ENCODE measurements at regions of chr9 and their contacts with region 1.

Region 1: DNA sequence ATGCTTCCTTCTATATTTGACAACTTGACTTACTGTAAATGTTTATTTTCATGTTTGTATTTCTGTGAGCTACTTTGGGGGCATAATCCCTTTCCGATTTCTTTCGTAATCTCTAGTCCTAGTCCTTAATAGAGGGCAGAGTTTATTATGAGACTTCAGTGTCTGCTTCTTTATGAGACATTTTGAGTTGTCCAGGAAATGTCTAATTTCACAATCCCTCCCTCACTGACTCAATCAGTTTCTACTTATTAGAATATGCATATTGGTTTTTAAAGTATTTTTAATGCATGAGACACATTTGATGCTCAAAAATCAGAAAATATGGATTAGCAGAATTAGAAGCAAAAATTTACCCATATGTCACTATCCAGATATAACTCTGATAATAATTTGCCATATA is 160.9 kb downstream of the FOCAD start:
- DNase-seq: no peak
- ATAC-seq: no peak
- H3K4me3 ChIP-seq: no peak overlapping the region
- H3K4me3 Mint-ChIP-seq: no peak overlapping the region
- H3K27ac ChIP-seq: no peak overlapping the region
- H3K27ac Mint-ChIP-seq: no peak overlapping the region
- H3K4me1 ChIP-seq: no peaks in the 10 kb centered on the region
- H3K4me1 Mint-ChIP-seq: peaks cover 0 to 7% (median 0%) of the 10 kb centered on the region in 3 donors
- H3K27me3 ChIP-seq: no peaks in the 10 kb centered on the region
- H3K27me3 Mint-ChIP-seq: no peaks in the 10 kb centered on the region

Region 2: GRCh38 chr9:20872340-20872977 is 27.5 kb after region 1 on chr9:
- CTCF ChIA-PET with region 1: no interaction called
- POLR2A ChIA-PET with region 1: no interaction called
- DNase-seq: no peak
- ATAC-seq: no peak
- H3K4me3 ChIP-seq: no peak overlapping the region
- H3K4me3 Mint-ChIP-seq: no peak overlapping the region
- H3K27ac ChIP-seq: no peak overlapping the region
- H3K27ac Mint-ChIP-seq: no peak overlapping the region
- H3K4me1 ChIP-seq: peaks cover 0 to 2% of the 10 kb centered on the region in 2 experiments
- H3K4me1 Mint-ChIP-seq: peaks cover 5 to 9% (median 5%) of the 10 kb centered on the region in 3 donors
- H3K27me3 ChIP-seq: no peaks in the 10 kb centered on the region
- H3K27me3 Mint-ChIP-seq: no peaks in the 10 kb centered on the region

Region 3: DNA sequence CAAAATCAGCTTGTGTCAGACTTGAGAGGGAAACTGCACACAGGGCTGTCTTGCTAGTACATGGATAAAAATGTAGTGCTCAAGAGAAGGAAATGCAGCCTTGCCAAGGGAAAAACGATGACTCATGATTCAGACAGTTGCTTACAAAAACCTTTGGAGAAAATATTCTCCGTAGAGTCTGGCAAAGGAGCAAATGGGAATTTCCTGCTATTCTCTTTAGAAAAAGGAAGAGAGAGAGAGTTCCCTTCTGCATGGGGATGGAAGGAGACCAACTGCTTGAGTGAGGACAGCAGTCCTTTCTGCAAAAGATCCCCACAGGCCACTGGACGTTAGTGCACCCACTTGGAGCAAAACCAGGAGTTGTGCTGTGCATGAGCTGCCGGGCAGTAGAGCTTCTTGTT is 225.3 kb after region 1 on chr9:
- CTCF ChIA-PET with region 1: no interaction called
- POLR2A ChIA-PET with region 1: interaction called in 1 of 2 experiments, 11 read pairs
- DNase-seq: no peak
- ATAC-seq: no peak
- H3K4me3 ChIP-seq: no peak overlapping the region
- H3K4me3 Mint-ChIP-seq: no peak overlapping the region
- H3K27ac ChIP-seq: no peak overlapping the region
- H3K27ac Mint-ChIP-seq: no peak overlapping the region
- H3K4me1 ChIP-seq: no peaks in the 10 kb centered on the region
- H3K4me1 Mint-ChIP-seq: no peaks in the 10 kb centered on the region
- H3K27me3 ChIP-seq: no peaks in the 10 kb centered on the region
- H3K27me3 Mint-ChIP-seq: no peaks in the 10 kb centered on the region